Dorsolateral prefrontal cortex (tissue), 120 donors: ENCODE measurements at regions of chr5 and their contacts with region 1.

Region 1: GRCh38 chr5:141701360-141702119 is 19.5 kb upstream of the ARAP3 start:
- DNase-seq: peak in 2 of 10 donors; percentile 55 to 69
- H3K4me3 ChIP-seq: peak overlapping the region in 55 of 59 donors; percentile 11 to 88 (median 64)
- H3K27ac ChIP-seq: peak overlapping the region in 56 of 59 donors; percentile 5 to 93 (median 84)
- H3K27me3 ChIP-seq: no peaks in the 10 kb centered on the region
- CTCF ChIP-seq: no peak

Region 2: GRCh38 chr5:140946578-140946977 is 755.0 kb before region 1 on chr5:
- intact Hi-C with region 1: no loop called
- DNase-seq: no peak
- H3K4me3 ChIP-seq: no peak overlapping the region
- H3K27ac ChIP-seq: no peak overlapping the region
- H3K27me3 ChIP-seq: no peaks in the 10 kb centered on the region
- CTCF ChIP-seq: no peak

Region 3: DNA sequence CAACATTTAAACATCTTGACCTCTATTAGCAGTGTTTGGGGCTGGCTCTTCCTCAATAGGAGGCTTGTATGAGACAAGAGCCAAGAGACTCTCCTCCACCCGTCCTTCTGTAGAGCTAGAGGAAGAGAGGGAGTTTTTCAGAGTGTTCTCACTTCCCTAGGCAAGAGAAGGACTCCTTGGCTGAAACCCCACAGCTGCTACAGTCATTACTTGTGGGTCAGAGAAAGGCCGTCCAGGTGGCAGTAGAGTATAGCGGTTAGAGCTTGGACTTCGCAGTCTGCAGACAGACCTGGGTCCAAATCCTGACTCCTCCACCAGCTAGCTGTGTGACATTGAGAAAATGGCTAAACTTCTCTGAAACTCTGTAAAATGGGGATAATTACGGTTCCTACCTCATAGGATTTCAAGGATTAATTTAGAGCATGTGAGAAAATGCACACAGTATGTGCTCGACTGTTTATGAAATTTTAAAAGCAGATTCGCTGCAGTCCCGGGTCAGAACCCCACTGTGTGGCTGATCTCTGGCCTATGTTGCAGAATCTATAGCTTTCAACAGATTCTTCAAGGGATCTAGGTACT is 61.3 kb after region 1 on chr5:
- intact Hi-C with region 1: loop called in 1 of 2 experiments (anchors 10 kb)
- DNase-seq: no peak
- H3K4me3 ChIP-seq: no peak overlapping the region
- H3K27ac ChIP-seq: peak overlapping the region in 51 of 59 donors; percentile 3 to 86 (median 54)
- H3K27me3 ChIP-seq: no peaks in the 10 kb centered on the region
- CTCF ChIP-seq: no peak

Region 4: DNA sequence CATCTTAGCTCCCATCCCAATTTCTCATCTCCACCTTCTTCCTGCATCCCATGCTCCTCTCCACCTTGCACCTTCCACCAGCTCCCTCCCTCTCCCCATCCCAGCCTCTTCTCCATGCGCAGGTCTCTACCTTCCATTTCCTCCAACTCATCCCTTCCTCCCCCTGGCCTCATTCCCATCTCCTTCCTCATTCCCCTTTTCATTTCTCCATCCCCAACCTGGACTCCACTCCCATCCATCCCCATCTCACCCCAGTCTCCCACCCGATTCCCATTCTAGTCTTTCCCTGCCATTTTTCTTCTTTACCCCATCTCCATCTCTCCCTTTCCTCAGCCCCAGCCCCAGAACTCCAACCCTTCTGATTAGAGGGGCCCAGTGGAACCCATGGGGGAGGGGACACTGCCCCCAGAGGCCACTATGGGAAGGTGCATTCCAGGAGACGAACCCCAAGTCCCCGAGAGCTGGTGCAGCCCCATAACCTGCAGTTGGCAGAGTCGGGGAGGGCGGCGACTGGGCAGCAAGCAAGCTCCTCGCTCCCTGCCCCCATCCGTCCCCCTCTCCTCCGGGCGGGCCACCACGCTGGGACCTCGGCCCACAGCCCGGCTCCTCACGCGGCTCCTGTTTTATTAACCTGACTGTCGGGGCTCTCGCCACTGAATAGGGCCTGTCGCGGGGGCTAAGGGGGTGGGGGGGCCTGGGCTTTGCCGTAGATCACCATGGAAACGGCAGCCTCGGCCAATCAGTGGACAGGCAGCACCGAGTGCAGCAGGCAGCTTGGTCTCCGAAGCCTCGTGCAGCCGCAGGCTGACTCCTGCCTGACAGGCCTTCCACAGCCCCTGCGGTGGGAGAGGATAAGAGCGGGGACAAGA is 110.0 kb after region 1 on chr5:
- intact Hi-C with region 1: loop called (anchors 5 kb)
- DNase-seq: peak; percentile 45 to 81 (median 68)
- H3K4me3 ChIP-seq: peak overlapping the region in 48 of 59 donors; percentile 4 to 53 (median 32)
- H3K27ac ChIP-seq: peak overlapping the region in 52 of 59 donors; percentile 16 to 84 (median 69)
- H3K27me3 ChIP-seq: no peaks in the 10 kb centered on the region
- CTCF ChIP-seq: peak in 55 of 56 donors; percentile 25 to 71 (median 57)

Region 5: DNA sequence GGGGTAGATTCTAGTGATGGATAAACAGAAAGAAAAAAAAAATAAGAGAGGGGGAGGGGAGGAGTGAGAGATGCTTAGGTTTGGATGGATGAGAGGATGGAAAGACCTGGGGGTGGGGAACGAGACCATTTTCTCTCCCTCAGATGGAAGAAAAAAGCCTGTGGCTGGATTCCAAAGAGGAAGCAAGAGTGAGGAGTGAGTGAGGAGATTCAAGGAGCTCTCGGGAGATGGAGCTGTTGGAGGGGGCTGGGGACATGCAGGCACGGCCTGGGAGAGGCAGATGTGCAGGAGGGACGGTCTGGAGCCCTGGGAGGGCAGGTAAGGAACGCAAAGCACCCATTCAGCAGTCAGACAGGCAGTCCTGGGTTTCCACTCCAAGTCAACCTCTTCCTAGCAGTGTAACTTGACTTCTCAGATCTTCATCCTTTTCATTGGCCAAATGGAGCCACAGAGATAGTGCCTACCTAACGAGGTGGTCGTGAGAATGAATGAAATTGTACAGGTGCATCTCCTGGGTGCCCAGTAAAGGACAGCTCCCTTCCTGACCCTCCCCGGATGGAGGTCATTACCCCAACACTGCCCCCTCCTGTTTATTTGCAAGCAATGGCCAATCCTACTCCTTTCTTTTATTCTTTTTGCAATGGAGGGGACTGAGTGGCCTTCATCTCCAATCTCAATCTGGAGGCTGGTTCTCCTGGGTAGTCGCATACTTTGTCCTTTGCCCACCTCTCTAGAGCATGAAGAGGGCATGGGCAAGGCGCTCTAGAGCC is 124.4 kb after region 1 on chr5:
- intact Hi-C with region 1: loop called (anchors 2 to 5 kb)
- DNase-seq: no peak
- H3K4me3 ChIP-seq: peak overlapping the region in 30 of 59 donors; percentile 8 to 56 (median 36)
- H3K27ac ChIP-seq: peak overlapping the region in 58 of 59 donors; percentile 15 to 98 (median 91)
- H3K27me3 ChIP-seq: no peaks in the 10 kb centered on the region
- CTCF ChIP-seq: peak in 54 of 56 donors; percentile 26 to 71 (median 54)

Region 6: DNA sequence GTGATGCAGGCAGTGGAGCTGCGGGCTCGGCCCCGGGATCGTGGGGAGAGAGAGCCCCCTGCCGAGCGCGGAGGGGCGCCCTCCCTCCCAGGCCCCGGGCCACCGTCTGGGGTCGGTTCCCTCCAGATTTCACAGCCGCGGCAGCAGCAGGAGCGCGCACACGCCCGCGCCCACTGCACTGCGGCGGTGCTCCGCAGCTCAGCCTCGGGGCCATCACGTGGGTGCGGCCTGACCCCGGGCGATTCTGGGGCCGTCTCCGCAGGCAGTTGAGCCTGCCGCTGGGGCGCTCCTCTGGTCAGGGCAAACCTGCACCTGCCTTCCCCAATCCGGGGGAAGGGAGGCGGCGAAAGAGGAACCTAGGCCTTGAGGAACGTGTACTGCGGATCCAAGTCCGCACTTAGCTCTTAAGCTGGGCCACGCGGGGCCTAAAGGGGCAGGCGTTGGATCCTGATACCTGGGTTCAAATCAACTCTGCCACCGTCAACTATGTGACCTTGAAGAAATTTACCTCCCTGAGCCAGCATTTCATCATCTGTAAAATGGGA is 212.7 kb after region 1 on chr5:
- intact Hi-C with region 1: loop called in 1 of 2 experiments (anchors 2 kb)
- DNase-seq: peak; percentile 38 to 79 (median 54)
- H3K4me3 ChIP-seq: peak overlapping the region; percentile 27 to 67 (median 50)
- H3K27ac ChIP-seq: peak overlapping the region in 58 of 59 donors; percentile 6 to 90 (median 76)
- H3K27me3 ChIP-seq: no peaks in the 10 kb centered on the region
- CTCF ChIP-seq: peak in 55 of 56 donors; percentile 32 to 89 (median 73)